Caco-2 (cell line): ENCODE measurements at regions of chr4 and their contacts with region 1.

Region 1: DNA sequence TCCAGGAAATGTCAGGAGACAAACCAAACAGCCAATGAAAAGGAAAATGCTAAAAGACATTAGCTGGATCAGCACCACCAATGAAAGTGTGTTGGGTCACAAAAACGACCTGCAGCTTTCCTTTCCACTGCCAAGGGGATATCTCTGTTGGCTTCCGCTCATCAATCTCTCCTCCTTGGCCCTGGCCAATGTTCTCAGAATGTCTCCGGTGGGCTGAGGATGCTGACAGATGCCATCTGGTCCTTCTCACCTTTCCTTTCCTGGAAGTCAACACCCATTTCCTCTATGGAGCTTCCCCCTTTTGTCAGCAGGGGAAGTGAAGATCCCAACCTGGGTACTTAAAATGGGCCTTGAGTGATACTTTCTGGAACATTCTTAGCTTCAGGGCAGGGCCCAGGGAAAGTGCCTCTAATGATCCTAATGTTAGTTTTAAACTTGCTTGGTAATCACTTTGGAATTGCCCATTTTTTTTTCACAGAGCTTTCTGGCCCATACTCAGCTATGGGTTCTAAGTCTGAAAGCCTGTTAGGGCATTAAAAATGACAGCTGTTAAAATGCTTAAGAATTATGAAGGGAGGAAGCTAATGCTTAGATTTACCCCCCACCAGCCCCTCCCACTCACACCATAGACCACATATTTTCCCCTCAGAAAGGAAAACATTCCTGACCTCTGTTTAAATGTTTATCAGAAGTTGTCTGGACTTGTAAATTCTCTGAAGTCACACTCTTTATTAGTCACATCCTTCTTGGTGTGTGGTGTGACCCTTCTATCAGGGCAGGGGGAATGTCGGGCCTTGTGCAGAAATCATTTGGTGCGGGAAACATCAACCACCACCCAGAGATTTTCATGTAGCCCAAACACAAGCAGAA is 29.2 kb downstream of the IGFBP7 start:
- DNase-seq: peak; percentile 39 to 54
- H3K4me3 ChIP-seq: no peak overlapping the region
- H3K4me3 Mint-ChIP-seq: peak overlapping the region; percentile 20
- H3K27ac Mint-ChIP-seq: peak overlapping the region; percentile 47
- H3K4me1 ChIP-seq: peaks cover 54% of the 10 kb centered on the region
- H3K4me1 Mint-ChIP-seq: peaks cover 28% of the 10 kb centered on the region
- H3K27me3 ChIP-seq: no peaks in the 10 kb centered on the region
- H3K27me3 Mint-ChIP-seq: no peaks in the 10 kb centered on the region
- CTCF ChIP-seq: no peak

Region 2: GRCh38 chr4:56977321-56978012 is 103.5 kb before region 1 on chr4 and contains the start of gene NOA1:
- CTCF ChIA-PET with region 1: no interaction called
- POLR2A ChIA-PET with region 1: interaction called, 10 read pairs
- intact Hi-C with region 1: no loop called
- DNase-seq: peak; percentile 97
- H3K4me3 ChIP-seq: peak within 1 kb of the TSS; percentile 94
- H3K4me3 Mint-ChIP-seq: peak within 1 kb of the TSS; percentile 99
- H3K27ac Mint-ChIP-seq: peak within 1 kb of the TSS; percentile 98
- H3K4me1 ChIP-seq: no peaks in the 10 kb centered on the region
- H3K4me1 Mint-ChIP-seq: peaks cover 9% of the 10 kb centered on the region
- H3K27me3 ChIP-seq: no peaks in the 10 kb centered on the region
- H3K27me3 Mint-ChIP-seq: no peaks in the 10 kb centered on the region
- CTCF ChIP-seq: no peak
- total RNA-seq, gene NOA1: 24.8 and 26.3 TPM in 2 replicates

Region 3: GRCh38 chr4:57044996-57045395 is 36.0 kb before region 1 on chr4:
- CTCF ChIA-PET with region 1: interaction called, 3 read pairs
- POLR2A ChIA-PET with region 1: no interaction called
- intact Hi-C with region 1: loop called (anchors 1 kb)
- DNase-seq: no peak
- H3K4me3 ChIP-seq: no peak overlapping the region
- H3K4me3 Mint-ChIP-seq: no peak overlapping the region
- H3K27ac Mint-ChIP-seq: no peak overlapping the region
- H3K4me1 ChIP-seq: 0 out of 2 replicates have a peak, but pooled peaks cover 15% of the 10 kb centered on the region
- H3K4me1 Mint-ChIP-seq: no peaks in the 10 kb centered on the region
- H3K27me3 ChIP-seq: no peaks in the 10 kb centered on the region
- H3K27me3 Mint-ChIP-seq: no peaks in the 10 kb centered on the region
- CTCF ChIP-seq: no peak

Region 4: GRCh38 chr4:57100979-57101651 is 20.1 kb after region 1 on chr4:
- CTCF ChIA-PET with region 1: no interaction called
- POLR2A ChIA-PET with region 1: interaction called, 8 read pairs
- intact Hi-C with region 1: loop called (anchors 1 kb)
- DNase-seq: peak; percentile 40 to 44
- H3K4me3 ChIP-seq: no peak overlapping the region
- H3K4me3 Mint-ChIP-seq: no peak overlapping the region
- H3K27ac Mint-ChIP-seq: no peak overlapping the region
- H3K4me1 ChIP-seq: peaks cover 21% of the 10 kb centered on the region
- H3K4me1 Mint-ChIP-seq: no peaks in the 10 kb centered on the region
- H3K27me3 ChIP-seq: no peaks in the 10 kb centered on the region
- H3K27me3 Mint-ChIP-seq: no peaks in the 10 kb centered on the region
- CTCF ChIP-seq: no peak

Region 5: GRCh38 chr4:57131849-57132742 is 51.1 kb after region 1 on chr4:
- CTCF ChIA-PET with region 1: no interaction called
- POLR2A ChIA-PET with region 1: interaction called, 3 read pairs
- intact Hi-C with region 1: loop called (anchors 1 kb)
- DNase-seq: peak; percentile 60 to 62
- H3K4me3 ChIP-seq: no peak overlapping the region
- H3K4me3 Mint-ChIP-seq: peak overlapping the region; percentile 9
- H3K27ac Mint-ChIP-seq: peak overlapping the region; percentile 75
- H3K4me1 ChIP-seq: peaks cover 14% of the 10 kb centered on the region
- H3K4me1 Mint-ChIP-seq: peaks cover 17% of the 10 kb centered on the region
- H3K27me3 ChIP-seq: no peaks in the 10 kb centered on the region
- H3K27me3 Mint-ChIP-seq: no peaks in the 10 kb centered on the region
- CTCF ChIP-seq: no peak